H1 (cell line): ENCODE measurements at regions of chr16 and their contacts with region 1.

Region 1: GRCh38 chr16:20650400-20651166 is 46.9 kb downstream of the ACSM1 start:
- DNase-seq: no peak
- H3K4me3 ChIP-seq: peak overlapping the region in 1 of 4 experiments; percentile 1; a peak in 1 of 8 replicates
- H3K27ac ChIP-seq: no peak overlapping the region
- H3K4me1 ChIP-seq: peaks cover 0 to 12% (median 4%) of the 10 kb centered on the region in 4 experiments; a peak in 5 of 7 replicates
- H3K27me3 ChIP-seq: no peaks in the 10 kb centered on the region
- CTCF ChIP-seq: no peak
- EP300 ChIP-seq: no peak
- POLR2A ChIP-seq: no peak
- RAD21 ChIP-seq: no peak

Region 2: DNA sequence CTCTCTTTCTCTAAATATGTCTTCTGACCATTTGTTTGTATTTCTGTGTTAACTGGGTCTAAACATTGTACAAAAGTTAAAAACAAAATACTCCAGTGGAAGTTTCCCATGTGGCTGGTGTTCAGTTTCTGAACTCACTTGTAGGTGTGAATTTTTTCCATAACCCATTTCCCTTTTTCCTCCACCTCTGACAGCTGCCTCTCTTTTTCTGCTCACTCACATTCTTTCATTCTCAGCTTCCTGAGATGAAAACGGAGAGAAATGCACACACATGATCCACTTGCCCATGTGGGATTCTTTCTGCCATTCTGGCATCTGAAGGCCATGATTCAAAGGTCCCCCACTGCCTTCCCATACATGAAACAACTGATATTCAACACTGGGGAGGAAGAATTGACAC is 33.3 kb before region 1 on chr16:
- CTCF ChIA-PET with region 1: no interaction called
- POLR2A ChIA-PET with region 1: no interaction called
- DNase-seq: no peak
- H3K4me3 ChIP-seq: no peak overlapping the region
- H3K27ac ChIP-seq: no peak overlapping the region
- H3K4me1 ChIP-seq: peaks cover 0 to 4% (median 1%) of the 10 kb centered on the region in 4 experiments; a peak in 4 of 7 replicates
- H3K27me3 ChIP-seq: no peaks in the 10 kb centered on the region
- CTCF ChIP-seq: no peak
- EP300 ChIP-seq: no peak
- POLR2A ChIP-seq: no peak
- RAD21 ChIP-seq: no peak

Region 3: GRCh38 chr16:20675488-20676267 is 25.1 kb after region 1 on chr16:
- CTCF ChIA-PET with region 1: interaction called, 3 read pairs
- POLR2A ChIA-PET with region 1: interaction called, 10 read pairs
- DNase-seq: peak; percentile 59 to 75
- H3K4me3 ChIP-seq: peak overlapping the region; percentile 2 to 54 (median 36); a peak in 6 of 8 replicates
- H3K27ac ChIP-seq: peak overlapping the region; percentile 69
- H3K4me1 ChIP-seq: peaks cover 18 to 25% (median 22%) of the 10 kb centered on the region in 4 experiments
- H3K27me3 ChIP-seq: peaks cover 0 to 4% (median 2%) of the 10 kb centered on the region in 4 experiments; a peak in 3 of 7 replicates
- CTCF ChIP-seq: no peak
- EP300 ChIP-seq: peak in 1 of 2 experiments; percentile 75; a peak in 1 of 3 replicates
- POLR2A ChIP-seq: 0 out of 3 replicates have a peak, but pooled peaks of 1 of the 2 experiments have one; percentile 13
- RAD21 ChIP-seq: peak in 1 of 2 experiments; percentile 1; a peak in 1 of 4 replicates

Region 4: DNA sequence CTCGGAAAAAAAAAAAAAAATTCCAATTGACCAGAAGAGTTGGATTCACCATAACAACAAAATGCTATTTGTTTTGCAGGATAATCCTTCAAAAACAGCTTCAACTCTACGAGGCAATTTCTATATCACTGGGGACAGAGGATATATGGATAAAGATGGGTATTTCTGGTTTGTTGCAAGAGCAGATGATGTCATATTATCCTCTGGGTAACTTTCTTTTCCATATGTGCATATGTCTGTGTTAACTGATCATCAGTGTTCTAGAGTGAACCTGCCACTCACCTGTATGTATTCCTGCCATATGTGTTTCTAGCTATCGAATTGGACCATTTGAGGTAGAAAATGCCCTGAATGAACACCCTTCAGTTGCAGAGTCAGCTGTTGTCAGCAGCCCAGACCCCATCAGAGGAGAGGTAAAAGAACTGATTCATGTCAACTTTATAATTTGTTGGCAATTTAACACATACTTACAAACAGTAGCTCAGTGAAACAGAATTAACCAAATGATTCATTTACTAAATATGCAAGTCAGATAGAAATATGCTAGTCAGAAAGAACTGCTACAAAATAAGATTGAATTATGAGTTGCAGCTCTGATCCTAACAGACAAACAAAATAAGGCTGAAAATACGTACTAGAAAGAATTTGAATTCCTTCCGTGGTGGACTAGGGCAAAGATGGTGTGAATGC is 141.5 kb after region 1 on chr16:
- CTCF ChIA-PET with region 1: no interaction called
- POLR2A ChIA-PET with region 1: no interaction called
- DNase-seq: no peak
- H3K4me3 ChIP-seq: no peak overlapping the region
- H3K27ac ChIP-seq: no peak overlapping the region
- H3K4me1 ChIP-seq: peaks cover 0 to 5% (median 1%) of the 10 kb centered on the region in 4 experiments; a peak in 2 of 7 replicates
- H3K27me3 ChIP-seq: no peaks in the 10 kb centered on the region
- CTCF ChIP-seq: no peak
- EP300 ChIP-seq: no peak
- POLR2A ChIP-seq: no peak
- RAD21 ChIP-seq: no peak